ENCODE measurements at regions of chr5 and their contacts with region 1.

Region 1: GRCh38 chr5:177006265-177006972 is at the start of gene UIMC1:
- DNase-seq: peak; percentile 93 to 97 (median 94)
- ATAC-seq: peak; percentile 92
- H3K4me3 ChIP-seq: peak within 1 kb of the TSS; percentile 94
- H3K27ac ChIP-seq: peak within 1 kb of the TSS; percentile 96
- H3K4me1 ChIP-seq: peaks cover 3 to 22% of the 10 kb centered on the region in 2 experiments; a peak in 3 of 5 replicates
- H3K27me3 ChIP-seq: no peaks in the 10 kb centered on the region
- CTCF ChIP-seq: no peak
- EP300 ChIP-seq: no peak
- POLR2A ChIP-seq: peak; percentile 81
- RAD21 ChIP-seq: no peak
- polyA plus RNA-seq, gene UIMC1: 14.9 to 23.6 TPM

Region 2: GRCh38 chr5:176959051-176959450 is 47.4 kb before region 1 on chr5:
- CTCF ChIA-PET with region 1: no interaction called
- POLR2A ChIA-PET with region 1: no interaction called
- in situ Hi-C with region 1: no loop called
- intact Hi-C with region 1: no loop called
- DNase-seq: peak; percentile 36 to 54 (median 43)
- ATAC-seq: peak; percentile 89
- H3K4me3 ChIP-seq: no peak overlapping the region
- H3K27ac ChIP-seq: no peak overlapping the region
- H3K4me1 ChIP-seq: no peaks in the 10 kb centered on the region
- H3K27me3 ChIP-seq: no peaks in the 10 kb centered on the region
- CTCF ChIP-seq: peak; percentile 34 to 70 (median 46); a peak in 4 of 6 replicates
- EP300 ChIP-seq: no peak
- POLR2A ChIP-seq: no peak
- RAD21 ChIP-seq: peak; percentile 41 to 70

Region 3: DNA sequence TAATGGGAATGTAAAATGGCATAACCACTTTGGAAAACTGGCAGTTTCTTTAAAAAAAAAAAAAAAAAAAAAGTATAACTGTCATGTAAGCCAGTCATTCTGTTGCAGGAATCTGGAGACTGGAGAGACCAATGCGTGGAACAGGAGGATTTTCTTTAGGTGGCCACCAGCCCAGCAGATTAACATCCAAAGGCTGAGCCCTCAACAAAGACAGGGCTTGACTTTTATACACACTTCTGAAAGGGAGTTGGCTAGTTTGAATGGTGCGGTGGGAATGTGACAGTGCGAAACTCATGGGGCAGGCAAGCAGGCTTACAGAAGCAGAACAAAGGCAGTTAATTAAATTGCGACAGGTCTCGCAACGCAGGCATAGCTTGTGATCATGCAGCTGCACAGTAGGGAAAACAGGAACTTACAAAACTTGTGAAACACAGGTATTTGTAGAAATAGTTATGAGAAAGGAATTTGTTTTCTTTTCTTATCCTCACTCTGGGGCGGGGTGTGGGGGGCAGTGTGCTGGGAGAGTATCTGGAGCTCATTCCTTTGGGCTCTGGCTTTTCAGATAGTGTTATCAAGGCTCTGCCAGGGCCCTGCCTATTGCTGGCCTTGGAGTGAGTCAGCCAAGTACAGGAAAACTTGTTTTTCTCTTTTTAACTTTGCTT is 11.8 kb before region 1 on chr5:
- CTCF ChIA-PET with region 1: interaction called, 3 read pairs
- POLR2A ChIA-PET with region 1: interaction called, 45 read pairs
- in situ Hi-C with region 1: no loop called
- intact Hi-C with region 1: no loop called
- DNase-seq: peak; percentile 41 to 91 (median 69)
- ATAC-seq: peak; percentile 87
- H3K4me3 ChIP-seq: no peak overlapping the region
- H3K27ac ChIP-seq: peak overlapping the region; percentile 91
- H3K4me1 ChIP-seq: peaks cover 26 to 31% of the 10 kb centered on the region in 2 experiments
- H3K27me3 ChIP-seq: no peaks in the 10 kb centered on the region
- CTCF ChIP-seq: no peak
- EP300 ChIP-seq: peak; percentile 91
- POLR2A ChIP-seq: no peak
- RAD21 ChIP-seq: peak in 1 of 2 experiments; percentile 32; a peak in 1 of 4 replicates

Region 4: GRCh38 chr5:177022384-177023308 is 16.2 kb after region 1 on chr5 and contains the start of gene ZNF346:
- CTCF ChIA-PET with region 1: no interaction called
- POLR2A ChIA-PET with region 1: interaction called, 6 read pairs
- in situ Hi-C with region 1: no loop called
- intact Hi-C with region 1: loop called (anchors 1 kb)
- DNase-seq: peak; percentile 95 to 97 (median 96)
- ATAC-seq: peak; percentile 94
- H3K4me3 ChIP-seq: peak within 1 kb of the TSS; percentile 90
- H3K27ac ChIP-seq: peak within 1 kb of the TSS; percentile 88
- H3K4me1 ChIP-seq: peaks cover 24 to 25% of the 10 kb centered on the region in 2 experiments; a peak in 4 of 5 replicates
- H3K27me3 ChIP-seq: no peaks in the 10 kb centered on the region
- CTCF ChIP-seq: peak; percentile 45 to 50 (median 48)
- EP300 ChIP-seq: no peak
- POLR2A ChIP-seq: peak; percentile 91
- RAD21 ChIP-seq: no peak
- polyA plus RNA-seq, gene ZNF346: 5.0 to 6.5 TPM

Region 5: GRCh38 chr5:177311723-177312648 is 305.6 kb after region 1 on chr5 and contains the start of gene MXD3:
- CTCF ChIA-PET with region 1: no interaction called
- POLR2A ChIA-PET with region 1: no interaction called
- in situ Hi-C with region 1: no loop called
- intact Hi-C with region 1: no loop called
- DNase-seq: peak; percentile 96 to 98 (median 97)
- ATAC-seq: peak; percentile 86
- H3K4me3 ChIP-seq: peak within 1 kb of the TSS; percentile 62
- H3K27ac ChIP-seq: peak within 1 kb of the TSS; percentile 100
- H3K4me1 ChIP-seq: peaks cover 23 to 77% of the 10 kb centered on the region in 2 experiments
- H3K27me3 ChIP-seq: no peaks in the 10 kb centered on the region
- CTCF ChIP-seq: no peak
- EP300 ChIP-seq: no peak
- POLR2A ChIP-seq: peak; percentile 81
- RAD21 ChIP-seq: no peak
- polyA plus RNA-seq, gene MXD3: 0.28 to 0.59 TPM

Measured in K562 (cell line).